Right cardiac atrium (tissue), 5 donors: ENCODE measurements at regions of chr6 and their contacts with region 1.

Region 1: GRCh38 chr6:148464319-148465010 is 121.8 kb downstream of the SASH1 start:
- DNase-seq: peak; percentile 48 to 80 (median 74)
- ATAC-seq: peak; percentile 69 to 71
- H3K4me3 ChIP-seq: no peak overlapping the region
- H3K27ac ChIP-seq: peak overlapping the region; percentile 0
- H3K4me1 ChIP-seq: peaks cover 16% of the 10 kb centered on the region
- H3K27me3 ChIP-seq: no peaks in the 10 kb centered on the region

Region 2: DNA sequence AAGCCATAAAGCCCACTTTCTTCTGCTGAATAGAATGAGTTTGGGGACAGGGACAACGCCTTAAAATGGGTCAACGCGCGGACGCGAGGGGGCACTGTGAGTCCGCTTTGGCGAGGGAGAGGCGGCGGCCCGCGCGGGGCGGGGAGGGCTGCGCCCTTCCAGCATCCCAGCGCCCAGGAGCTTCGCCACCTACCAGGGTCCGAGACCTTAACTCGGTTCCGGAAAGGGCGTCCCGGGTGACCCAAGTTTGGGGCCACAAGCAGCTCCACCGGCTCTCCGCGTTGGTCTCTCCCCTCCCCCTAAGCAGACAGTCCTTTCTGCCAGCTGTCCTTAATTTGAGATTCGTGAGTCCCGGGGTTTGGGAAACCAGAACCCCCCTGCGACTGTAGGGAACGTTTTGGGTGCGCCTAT is 957.8 kb before region 1 on chr6:
- intact Hi-C with region 1: loop called in 3 of 4 experiments (anchors 10 kb)
- DNase-seq: peak; percentile 80 to 91 (median 89)
- ATAC-seq: peak; percentile 78 to 83
- H3K4me3 ChIP-seq: peak overlapping the region; percentile 86
- H3K27ac ChIP-seq: no peak overlapping the region
- H3K4me1 ChIP-seq: no peaks in the 10 kb centered on the region
- H3K27me3 ChIP-seq: no peaks in the 10 kb centered on the region

Region 3: DNA sequence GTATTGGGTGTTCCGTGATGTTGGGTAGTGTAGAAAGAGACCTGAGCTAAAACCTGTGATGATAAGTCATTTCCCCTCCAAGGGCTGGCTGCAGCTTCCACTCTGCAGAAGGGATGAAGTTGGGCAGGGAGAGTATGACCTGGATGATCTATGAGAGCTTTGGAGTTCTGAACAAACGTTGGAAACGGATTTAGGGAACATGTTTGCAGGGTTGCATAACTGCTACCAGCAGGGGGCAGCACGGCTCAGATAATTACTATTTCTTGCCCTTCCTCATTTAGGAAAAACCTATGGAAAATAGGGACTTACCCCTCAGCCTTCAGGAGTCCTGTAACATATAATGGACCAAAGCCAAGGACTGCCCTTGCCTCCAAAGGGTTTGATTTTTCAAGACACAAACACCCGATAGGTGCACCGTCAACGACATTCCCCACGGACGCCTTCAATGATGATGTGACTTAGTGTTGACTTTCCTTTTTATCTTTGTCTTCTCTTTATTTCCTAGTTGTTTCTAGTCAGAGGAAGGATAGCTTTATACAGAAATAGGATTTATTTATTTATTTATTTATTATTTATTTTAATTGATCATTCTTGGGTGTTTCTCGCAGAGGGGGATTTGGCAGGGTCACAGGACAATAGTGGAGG is 286.8 kb before region 1 on chr6:
- intact Hi-C with region 1: loop called (anchors 2 to 10 kb)
- DNase-seq: peak; percentile 70 to 91 (median 79)
- ATAC-seq: peak in 1 of 2 donors; percentile 55
- H3K4me3 ChIP-seq: no peak overlapping the region
- H3K27ac ChIP-seq: no peak overlapping the region
- H3K4me1 ChIP-seq: no peaks in the 10 kb centered on the region
- H3K27me3 ChIP-seq: no peaks in the 10 kb centered on the region

Region 4: GRCh38 chr6:148250975-148251685 is 213.3 kb before region 1 on chr6:
- intact Hi-C with region 1: loop called in 1 of 4 experiments (anchors 10 kb)
- DNase-seq: no peak
- ATAC-seq: peak; percentile 63 to 71
- H3K4me3 ChIP-seq: no peak overlapping the region
- H3K27ac ChIP-seq: no peak overlapping the region
- H3K4me1 ChIP-seq: peaks cover 1% of the 10 kb centered on the region
- H3K27me3 ChIP-seq: no peaks in the 10 kb centered on the region

Region 5: DNA sequence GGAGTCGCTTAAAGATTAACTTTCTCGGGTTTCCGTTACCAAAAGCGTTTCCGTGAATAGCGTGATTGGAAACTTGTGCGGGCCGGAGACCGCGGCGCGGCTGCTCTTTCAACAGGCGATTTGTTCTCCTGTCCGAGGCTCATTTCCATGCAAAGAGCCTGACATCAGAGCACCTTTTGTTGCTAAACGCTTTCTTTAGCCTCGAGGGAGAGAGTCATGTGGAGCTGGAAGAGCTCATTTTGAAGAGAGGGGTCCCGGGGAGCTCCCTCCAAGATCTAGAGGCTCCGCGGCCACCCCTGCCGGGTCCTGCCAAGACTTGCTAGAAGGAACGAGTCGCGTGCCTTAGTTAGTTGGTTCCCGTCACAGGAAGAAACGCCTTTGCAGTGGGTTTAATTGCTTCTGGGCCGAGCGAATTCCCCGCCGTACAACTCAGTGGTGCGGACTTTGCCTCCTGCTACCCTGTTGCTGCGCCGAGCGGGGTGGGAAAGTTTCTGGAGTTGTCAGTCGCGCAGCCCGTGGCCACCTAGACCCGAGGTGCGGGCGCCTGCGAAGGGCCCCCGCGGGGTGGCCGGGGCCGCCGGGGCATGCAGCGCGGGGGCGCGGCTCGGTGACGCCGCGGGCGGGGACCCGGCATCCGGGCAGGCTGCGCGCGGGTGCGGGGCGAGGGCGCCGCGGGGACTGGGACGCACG is 122.0 kb before region 1 on chr6 and contains the start of gene SASH1:
- intact Hi-C with region 1: loop called in 3 of 4 experiments (anchors 5 to 10 kb)
- DNase-seq: peak; percentile 72 to 86 (median 82)
- ATAC-seq: peak; percentile 82 to 84
- H3K4me3 ChIP-seq: peak within 1 kb of the TSS; percentile 90
- H3K27ac ChIP-seq: peak within 1 kb of the TSS; percentile 83
- H3K4me1 ChIP-seq: no peaks in the 10 kb centered on the region
- H3K27me3 ChIP-seq: no peaks in the 10 kb centered on the region
- total RNA-seq, gene SASH1: 25.3 to 33.2 (median 29.5) TPM

Region 6: GRCh38 chr6:148593130-148593812 is 128.8 kb after region 1 on chr6:
- intact Hi-C with region 1: no loop called
- DNase-seq: peak in 1 of 3 donors; percentile 33
- ATAC-seq: peak; percentile 81 to 91
- H3K4me3 ChIP-seq: no peak overlapping the region
- H3K27ac ChIP-seq: peak overlapping the region; percentile 71
- H3K4me1 ChIP-seq: peaks cover 1% of the 10 kb centered on the region
- H3K27me3 ChIP-seq: no peaks in the 10 kb centered on the region